ENCODE measurements at regions of chr1 and their contacts with region 1.

Region 1: GRCh38 chr1:119367427-119368124 is 1.0 kb upstream of the HAO2 start:
- DNase-seq: no peak
- H3K4me3 ChIP-seq: no peak overlapping the region
- H3K27ac ChIP-seq: no peak overlapping the region
- H3K4me1 ChIP-seq: no peaks in the 10 kb centered on the region
- H3K27me3 ChIP-seq: no peaks in the 10 kb centered on the region
- CTCF ChIP-seq: peak; percentile 85

Region 2: DNA sequence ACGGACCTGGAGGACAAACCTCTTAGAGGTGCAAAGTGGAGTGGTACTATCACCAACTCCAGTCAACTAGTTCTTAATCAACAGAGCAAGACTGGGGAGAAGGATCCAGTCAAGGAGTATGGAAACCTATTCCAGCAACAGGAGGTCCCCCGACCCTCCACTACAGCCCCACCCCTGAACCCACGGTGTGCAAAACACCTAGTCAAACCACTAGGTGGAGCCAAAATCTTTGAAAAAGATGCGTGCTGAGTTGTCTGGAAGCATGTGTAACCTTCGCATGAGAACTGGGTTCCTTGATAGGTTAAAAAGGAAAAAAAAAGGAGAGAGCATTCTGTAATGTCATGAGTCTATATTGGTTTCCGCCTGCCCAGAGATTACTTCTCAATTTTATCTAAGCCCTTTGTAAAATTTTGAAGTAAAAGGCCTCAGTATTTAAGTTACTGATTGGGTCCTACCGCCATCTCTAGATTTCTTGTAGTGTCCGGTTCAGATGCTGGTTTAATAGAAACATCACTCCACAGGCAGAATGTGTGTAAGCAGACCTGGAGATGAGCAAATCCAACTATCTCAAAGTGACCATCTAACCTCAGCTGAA is 80.9 kb before region 1 on chr1:
- intact Hi-C with region 1: loop called (anchors 2 kb)
- DNase-seq: peak; percentile 25
- H3K4me3 ChIP-seq: no peak overlapping the region
- H3K27ac ChIP-seq: no peak overlapping the region
- H3K4me1 ChIP-seq: no peaks in the 10 kb centered on the region
- H3K27me3 ChIP-seq: no peaks in the 10 kb centered on the region
- CTCF ChIP-seq: peak; percentile 55

Region 3: DNA sequence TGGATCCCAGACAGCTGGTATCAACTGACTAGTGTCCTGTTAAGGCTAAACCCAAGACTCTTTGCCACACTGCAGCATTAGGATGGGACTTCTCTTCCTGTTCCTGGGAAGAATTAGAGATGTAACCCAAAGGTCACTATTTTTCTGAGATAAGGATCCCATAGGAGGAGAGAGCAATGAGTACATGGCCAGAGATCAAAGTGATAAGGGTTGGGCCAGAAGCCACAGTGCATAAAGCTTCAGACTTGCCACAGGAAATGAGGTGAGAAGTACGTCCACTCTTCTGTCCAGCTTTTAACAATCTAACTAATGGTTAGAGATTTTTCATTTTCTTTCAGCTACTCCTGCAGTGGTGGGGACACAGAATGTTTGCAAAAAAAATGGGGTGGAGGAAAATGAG is 139.4 kb after region 1 on chr1 and contains the start of gene HSD3B1:
- intact Hi-C with region 1: no loop called
- DNase-seq: no peak
- H3K4me3 ChIP-seq: no peak within 1 kb of the TSS
- H3K27ac ChIP-seq: no peak within 1 kb of the TSS
- H3K4me1 ChIP-seq: no peaks in the 10 kb centered on the region
- H3K27me3 ChIP-seq: no peaks in the 10 kb centered on the region
- CTCF ChIP-seq: no peak
- total RNA-seq, gene HSD3B1: 0.72 TPM in 1 of 2 donors, not detected in the other